AG04449 (cell line): ENCODE measurements at regions of chr17 and their contacts with region 1.

Region 1: DNA sequence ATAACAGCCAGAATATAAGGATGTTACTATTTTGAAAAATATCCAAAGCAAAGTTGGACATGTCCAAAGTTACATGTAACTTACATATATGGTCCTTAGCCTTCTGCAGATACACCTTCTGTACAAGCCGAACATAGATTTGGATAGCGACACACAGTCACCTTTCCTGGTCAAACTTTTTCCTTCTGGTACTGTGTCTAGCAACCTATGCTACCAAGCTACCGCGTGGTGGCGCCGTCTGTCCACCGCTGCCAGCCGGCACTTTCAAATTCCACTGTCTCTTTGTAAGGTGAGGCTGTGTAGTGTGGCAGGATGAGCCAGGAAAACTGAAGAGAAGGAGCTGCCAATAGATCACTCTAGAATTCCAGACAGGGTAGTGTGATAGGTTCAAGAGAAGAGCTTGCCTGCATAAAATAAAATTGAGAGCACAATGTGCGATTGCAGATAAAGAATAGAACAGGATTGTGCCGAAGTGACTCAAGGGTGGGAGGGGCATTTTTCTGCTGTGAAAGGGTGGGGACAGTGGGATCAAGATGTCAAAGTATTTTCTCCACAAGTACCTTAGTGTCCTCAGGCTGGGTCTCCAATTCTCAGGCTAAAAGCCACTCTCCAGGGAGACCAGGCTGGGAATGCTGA is 366.9 kb downstream of the SLC39A11 start:
- DNase-seq: no peak
- H3K4me3 ChIP-seq: no peak overlapping the region
- CTCF ChIP-seq: peak; percentile 90

Region 2: GRCh38 chr17:72580321-72581127 is 145.0 kb before region 1 on chr17:
- CTCF ChIA-PET with region 1: interaction called, 14 read pairs
- POLR2A ChIA-PET with region 1: no interaction called
- DNase-seq: no peak
- H3K4me3 ChIP-seq: no peak overlapping the region
- CTCF ChIP-seq: no peak

Region 3: DNA sequence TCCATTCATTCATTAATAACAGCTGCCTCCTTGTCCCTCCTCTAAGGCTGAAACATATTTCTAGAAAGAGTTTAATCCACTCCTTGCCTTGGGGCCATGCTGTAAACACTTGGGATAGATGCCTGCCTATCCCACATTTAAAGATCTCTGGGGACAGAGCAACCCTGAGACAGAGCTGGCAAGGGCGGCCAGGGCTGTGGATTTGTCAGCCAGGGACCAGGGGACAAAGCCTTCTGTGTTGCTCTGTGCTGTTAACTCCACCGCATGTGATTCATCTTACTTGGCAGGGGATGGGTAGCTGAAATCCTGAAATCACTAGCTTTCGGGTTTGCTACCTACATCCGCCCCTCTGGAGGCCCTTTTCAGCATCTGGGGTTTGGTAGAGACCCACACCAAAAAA is 26.0 kb before region 1 on chr17:
- CTCF ChIA-PET with region 1: interaction called, 27 read pairs
- POLR2A ChIA-PET with region 1: no interaction called
- DNase-seq: no peak
- H3K4me3 ChIP-seq: no peak overlapping the region
- CTCF ChIP-seq: no peak

Region 4: GRCh38 chr17:72771736-72772135 is 46.2 kb after region 1 on chr17:
- CTCF ChIA-PET with region 1: no interaction called
- POLR2A ChIA-PET with region 1: no interaction called
- DNase-seq: no peak
- H3K4me3 ChIP-seq: no peak overlapping the region
- CTCF ChIP-seq: no peak

Region 5: GRCh38 chr17:72915625-72916081 is 190.1 kb after region 1 on chr17:
- CTCF ChIA-PET with region 1: no interaction called
- POLR2A ChIA-PET with region 1: no interaction called
- DNase-seq: no peak
- H3K4me3 ChIP-seq: no peak overlapping the region
- CTCF ChIP-seq: no peak

Region 6: GRCh38 chr17:73166731-73167581 is 441.4 kb after region 1 on chr17:
- CTCF ChIA-PET with region 1: interaction called, 19 read pairs
- POLR2A ChIA-PET with region 1: no interaction called
- DNase-seq: no peak
- H3K4me3 ChIP-seq: peak overlapping the region; percentile 54
- CTCF ChIP-seq: no peak

Region 7: DNA sequence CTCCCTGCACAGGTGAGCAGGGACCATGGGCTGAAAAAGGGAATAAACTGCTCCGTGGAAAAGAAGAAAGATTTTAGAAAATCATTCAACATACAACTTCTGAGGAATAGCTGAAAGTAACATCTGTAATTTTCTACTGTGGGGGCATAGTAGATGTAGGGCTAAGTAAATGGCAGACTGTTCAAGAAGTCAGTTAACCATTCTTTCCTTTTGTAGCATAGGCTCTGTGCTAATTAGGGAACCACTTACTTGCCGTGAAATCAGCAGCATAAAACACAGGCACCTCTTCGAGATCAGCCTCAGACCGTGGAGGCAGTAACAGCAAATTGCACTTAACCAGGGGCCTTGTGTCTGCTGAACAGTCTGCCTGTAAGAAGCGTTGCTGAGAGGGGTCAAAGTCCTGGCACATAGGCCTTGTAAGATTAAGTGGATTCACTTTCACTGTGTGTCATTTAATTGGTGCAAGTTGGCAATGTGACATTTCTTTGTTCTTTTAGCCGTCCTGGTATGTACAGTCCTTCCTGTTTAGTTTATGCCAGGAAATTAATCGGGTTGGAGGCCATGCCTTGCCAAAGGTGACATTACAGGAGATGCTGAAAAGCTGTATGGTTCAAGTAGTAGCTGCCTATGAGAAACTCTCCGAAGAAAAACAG is 477.7 kb after region 1 on chr17:
- CTCF ChIA-PET with region 1: interaction called, 60 read pairs
- POLR2A ChIA-PET with region 1: no interaction called
- DNase-seq: no peak
- H3K4me3 ChIP-seq: no peak overlapping the region
- CTCF ChIP-seq: no peak